ENCODE measurements at regions of chr15 and their contacts with region 1.

Region 1: GRCh38 chr15:75302318-75302717 is 19.7 kb downstream of the GOLGA6D start:
- DNase-seq: no peak
- H3K4me3 Mint-ChIP-seq: no peak overlapping the region
- H3K27ac Mint-ChIP-seq: no peak overlapping the region
- H3K4me1 Mint-ChIP-seq: peaks cover 1% of the 10 kb centered on the region
- H3K27me3 Mint-ChIP-seq: peaks cover 53% of the 10 kb centered on the region
- CTCF ChIP-seq: no peak

Region 2: DNA sequence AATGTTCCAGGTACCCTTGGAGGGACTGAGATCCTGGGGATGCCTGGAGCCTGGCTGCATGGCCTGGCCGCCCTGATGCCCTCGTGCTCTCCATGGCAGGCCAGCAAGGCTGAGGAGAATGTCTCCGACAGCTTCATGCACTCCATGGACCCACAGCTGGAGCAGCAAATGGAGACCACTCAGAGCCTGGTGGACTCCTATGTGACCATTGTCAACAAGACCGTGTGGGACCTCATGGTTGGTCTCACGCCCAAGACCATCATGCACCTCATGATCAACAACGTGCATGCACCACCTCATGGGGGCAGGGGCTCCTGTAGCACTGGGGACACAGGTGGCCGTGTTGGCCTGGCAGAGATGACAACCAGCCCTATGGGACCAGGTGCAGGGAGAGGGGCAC is 1239.6 kb before region 1 on chr15:
- CTCF ChIA-PET with region 1: interaction called, 12 read pairs
- intact Hi-C with region 1: no loop called
- DNase-seq: no peak
- H3K4me3 Mint-ChIP-seq: no peak overlapping the region
- H3K27ac Mint-ChIP-seq: no peak overlapping the region
- H3K4me1 Mint-ChIP-seq: peaks cover 11% of the 10 kb centered on the region
- H3K27me3 Mint-ChIP-seq: peaks cover 39% of the 10 kb centered on the region
- CTCF ChIP-seq: no peak

Region 3: GRCh38 chr15:75446151-75446550 is 143.8 kb after region 1 on chr15:
- CTCF ChIA-PET with region 1: no interaction called
- intact Hi-C with region 1: no loop called
- DNase-seq: no peak
- H3K4me3 Mint-ChIP-seq: no peak overlapping the region
- H3K27ac Mint-ChIP-seq: peak overlapping the region; percentile 22
- H3K4me1 Mint-ChIP-seq: peaks cover 10% of the 10 kb centered on the region
- H3K27me3 Mint-ChIP-seq: no peaks in the 10 kb centered on the region
- CTCF ChIP-seq: no peak

Measured in Calu3 (cell line).